Activated T-helper 2 cell treated with anti-CD3 and anti-CD28 coated beads, Interferon-gamma antibody, Interleukin-2, Interleukin-4, amounts not matched to agents 10 μg/mL and 5 μg/mL and 100 μg/mL, durations not matched to agents 14 hours and 24 hours and 36 hours (primary cell): ENCODE measurements at regions of chr11 and their contacts with region 1.

Region 1: GRCh38 chr11:117426269-117426685 is 98.6 kb downstream of the CEP164 start:
- DNase-seq: peak; percentile 44
- H3K4me3 Mint-ChIP-seq: no peak overlapping the region
- H3K27ac Mint-ChIP-seq: no peak overlapping the region
- H3K4me1 Mint-ChIP-seq: no peaks in the 10 kb centered on the region
- H3K27me3 Mint-ChIP-seq: no peaks in the 10 kb centered on the region

Region 2: DNA sequence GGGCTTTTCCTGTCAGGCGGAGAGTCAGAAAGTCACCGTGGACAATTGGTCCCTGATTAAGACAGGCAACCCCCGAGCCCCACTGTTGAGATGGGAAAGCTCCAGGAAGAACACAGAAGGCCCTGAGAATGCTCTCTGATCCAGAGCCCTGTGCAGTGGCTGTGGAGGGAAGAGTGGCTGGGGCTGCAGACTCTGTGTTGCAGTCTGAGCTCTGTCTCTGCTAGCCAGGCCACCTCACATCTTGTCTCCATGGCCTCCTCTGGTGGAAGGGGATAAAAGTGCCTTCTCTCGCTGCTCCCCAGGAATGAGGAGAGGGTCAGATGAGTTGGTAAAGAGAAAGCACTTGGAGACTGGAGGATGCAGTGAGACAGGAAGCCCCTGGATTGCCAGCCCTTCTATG is 42.6 kb after region 1 on chr11:
- intact Hi-C with region 1: loop called (anchors 5 kb)
- DNase-seq: no peak
- H3K4me3 Mint-ChIP-seq: no peak overlapping the region
- H3K27ac Mint-ChIP-seq: no peak overlapping the region
- H3K4me1 Mint-ChIP-seq: no peaks in the 10 kb centered on the region
- H3K27me3 Mint-ChIP-seq: no peaks in the 10 kb centered on the region

Region 3: DNA sequence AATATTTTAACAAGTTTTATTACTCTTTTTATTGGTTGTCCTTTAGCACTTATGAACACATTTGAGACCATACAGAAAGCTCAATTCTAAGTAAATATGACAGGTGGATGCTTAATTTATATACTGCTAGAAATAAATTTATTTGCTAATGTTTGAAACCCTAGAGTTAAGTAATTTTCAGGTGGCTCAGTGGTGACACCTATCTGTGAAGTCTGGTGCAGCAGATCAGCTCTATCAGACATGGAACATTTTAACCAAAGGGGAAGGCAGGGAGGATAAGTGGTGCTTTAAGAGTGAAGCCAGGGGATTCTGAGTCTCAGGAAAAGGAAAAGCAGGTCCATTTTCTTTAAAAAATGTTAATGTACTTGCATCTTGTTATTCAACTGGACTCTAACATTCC is 194.9 kb after region 1 on chr11:
- intact Hi-C with region 1: loop called (anchors 5 kb)
- DNase-seq: no peak
- H3K4me3 Mint-ChIP-seq: no peak overlapping the region
- H3K27ac Mint-ChIP-seq: no peak overlapping the region
- H3K4me1 Mint-ChIP-seq: no peaks in the 10 kb centered on the region
- H3K27me3 Mint-ChIP-seq: peaks cover 12% of the 10 kb centered on the region